ENCODE measurements at regions of chr2 and their contacts with region 1.

Region 1: DNA sequence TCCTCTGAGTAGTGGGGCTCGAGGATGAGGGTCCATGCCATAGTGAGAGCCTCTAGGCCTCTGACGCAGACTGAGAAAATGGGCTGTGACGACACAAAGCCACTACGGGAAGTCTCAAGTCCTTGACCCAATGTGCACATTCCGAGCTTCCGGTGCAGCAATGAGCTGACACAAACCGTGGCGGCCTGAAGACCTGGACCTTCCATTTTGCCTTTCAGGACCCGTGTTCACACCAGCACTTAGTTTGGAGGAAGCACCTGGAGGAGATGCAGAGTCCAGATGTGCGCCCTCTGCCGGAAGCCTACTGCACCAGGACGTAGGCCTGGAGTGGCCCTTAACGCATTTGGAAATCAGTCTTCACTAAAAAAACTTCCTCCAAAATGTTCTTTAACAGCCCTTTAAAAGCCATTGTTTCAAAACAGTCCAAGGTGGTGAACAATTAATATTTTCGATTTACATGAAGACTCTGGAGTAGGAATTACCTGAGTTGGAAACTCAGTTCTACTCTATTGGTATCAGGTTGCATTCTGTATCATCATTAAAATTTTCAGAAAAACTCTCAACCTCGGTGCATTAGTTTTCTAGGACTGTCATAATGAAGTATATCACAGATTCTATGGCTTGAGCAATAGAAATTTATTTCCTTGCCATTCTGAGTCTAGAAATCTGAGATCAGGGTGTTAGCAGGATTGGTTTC is 33.9 kb downstream of the BMP10 start:
- DNase-seq: peak; percentile 85
- H3K4me3 ChIP-seq: no peak overlapping the region
- H3K27ac ChIP-seq: no peak overlapping the region
- H3K4me1 ChIP-seq: peaks cover 50% of the 10 kb centered on the region
- CTCF ChIP-seq: peak; percentile 97

Region 2: GRCh38 chr2:68074050-68074449 is 763.3 kb before region 1 on chr2:
- CTCF ChIA-PET with region 1: no interaction called
- POLR2A ChIA-PET with region 1: no interaction called
- intact Hi-C with region 1: no loop called
- DNase-seq: no peak
- H3K4me3 ChIP-seq: no peak overlapping the region
- H3K27ac ChIP-seq: no peak overlapping the region
- H3K4me1 ChIP-seq: no peaks in the 10 kb centered on the region
- CTCF ChIP-seq: no peak

Region 3: GRCh38 chr2:68709421-68709911 is 127.8 kb before region 1 on chr2:
- CTCF ChIA-PET with region 1: no interaction called
- POLR2A ChIA-PET with region 1: no interaction called
- intact Hi-C with region 1: loop called (anchors 2 kb)
- DNase-seq: peak; percentile 73
- H3K4me3 ChIP-seq: no peak overlapping the region
- H3K27ac ChIP-seq: no peak overlapping the region
- H3K4me1 ChIP-seq: peaks cover 21% of the 10 kb centered on the region
- CTCF ChIP-seq: peak; percentile 98

Measured in OCI-LY7 (cell line).